ENCODE measurements at regions of chr1 and their contacts with region 1.

Region 1: DNA sequence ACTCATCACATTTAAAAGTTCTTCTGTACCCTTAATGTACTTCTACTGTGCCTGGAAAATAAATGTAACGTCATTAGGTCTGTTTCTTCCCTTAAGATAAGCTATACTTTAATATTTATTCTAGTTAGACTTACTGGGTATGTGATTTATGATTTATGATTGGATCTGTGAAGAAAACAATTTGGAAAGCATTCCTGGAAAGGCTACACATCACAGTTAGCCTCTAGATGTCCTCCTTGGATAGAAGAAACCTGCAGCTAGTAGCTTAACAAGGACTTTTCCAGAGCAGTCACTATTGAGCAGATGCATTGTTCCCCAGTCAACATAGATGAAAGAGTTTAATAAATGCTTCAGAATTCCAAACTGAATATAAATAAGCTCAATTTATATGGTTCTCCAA is 22.2 kb upstream of the ABL2 start:
- DNase-seq: no peak
- H3K4me3 ChIP-seq: no peak overlapping the region
- H3K27ac ChIP-seq: no peak overlapping the region
- H3K4me1 ChIP-seq: no peaks in the 10 kb centered on the region
- H3K27me3 ChIP-seq: no peaks in the 10 kb centered on the region
- CTCF ChIP-seq: peak; percentile 30 to 60 (median 44)
- EP300 ChIP-seq: no peak
- POLR2A ChIP-seq: no peak

Region 2: GRCh38 chr1:179586107-179586823 is 334.6 kb after region 1 on chr1:
- in situ Hi-C with region 1: loop called in 1 of 4 experiments (anchors 25 kb)
- intact Hi-C with region 1: no loop called
- DNase-seq: peak; percentile 65
- H3K4me3 ChIP-seq: peak overlapping the region in 3 of 4 donors; percentile 26 to 50 (median 34)
- H3K27ac ChIP-seq: peak overlapping the region; percentile 42 to 81 (median 60)
- H3K4me1 ChIP-seq: peaks cover 0 to 12% (median 4%) of the 10 kb centered on the region in 4 donors
- H3K27me3 ChIP-seq: peaks cover 11% of the 10 kb centered on the region
- CTCF ChIP-seq: peak; percentile 46 to 70 (median 66)
- EP300 ChIP-seq: no peak
- POLR2A ChIP-seq: peak; percentile 8

Measured in transverse colon (tissue), 4 donors.